Ascending aorta (tissue), 2 donors: ENCODE measurements at regions of chr17 and their contacts with region 1.

Region 1: GRCh38 chr17:18038861-18039534 is at the starts of genes ATPAF2 and GID4:
- DNase-seq: peak; percentile 98 to 100
- H3K4me3 ChIP-seq: peak within 1 kb of the TSS; percentile 93 to 98
- H3K27ac ChIP-seq: peak within 1 kb of the TSS; percentile 62 to 76
- H3K4me1 ChIP-seq: peaks cover 3 to 18% of the 10 kb centered on the region in 2 donors
- H3K27me3 ChIP-seq: no peaks in the 10 kb centered on the region
- CTCF ChIP-seq: no peak
- total RNA-seq, gene ATPAF2: 2.6 TPM
- total RNA-seq, gene GID4: 8.3 TPM

Region 2: GRCh38 chr17:17280613-17281549 is 758.1 kb before region 1 on chr17 and contains the start of gene COPS3:
- intact Hi-C with region 1: loop called (anchors 5 kb)
- DNase-seq: peak; percentile 88 to 99
- H3K4me3 ChIP-seq: peak within 1 kb of the TSS; percentile 88 to 92
- H3K27ac ChIP-seq: peak within 1 kb of the TSS; percentile 97 to 98
- H3K4me1 ChIP-seq: peaks cover 5 to 14% of the 10 kb centered on the region in 2 donors
- H3K27me3 ChIP-seq: no peaks in the 10 kb centered on the region
- CTCF ChIP-seq: no peak
- total RNA-seq, gene COPS3: 36.6 TPM

Region 3: GRCh38 chr17:17591355-17592298 is 447.4 kb before region 1 on chr17 and contains the start of gene PEMT:
- intact Hi-C with region 1: loop called (anchors 5 kb)
- DNase-seq: peak; percentile 92 to 99
- H3K4me3 ChIP-seq: peak within 1 kb of the TSS; percentile 79 to 80
- H3K27ac ChIP-seq: peak within 1 kb of the TSS; percentile 81 to 85
- H3K4me1 ChIP-seq: peaks cover 2 to 14% of the 10 kb centered on the region in 2 donors
- H3K27me3 ChIP-seq: no peaks in the 10 kb centered on the region
- CTCF ChIP-seq: no peak
- total RNA-seq, gene PEMT: 690 TPM

Region 4: DNA sequence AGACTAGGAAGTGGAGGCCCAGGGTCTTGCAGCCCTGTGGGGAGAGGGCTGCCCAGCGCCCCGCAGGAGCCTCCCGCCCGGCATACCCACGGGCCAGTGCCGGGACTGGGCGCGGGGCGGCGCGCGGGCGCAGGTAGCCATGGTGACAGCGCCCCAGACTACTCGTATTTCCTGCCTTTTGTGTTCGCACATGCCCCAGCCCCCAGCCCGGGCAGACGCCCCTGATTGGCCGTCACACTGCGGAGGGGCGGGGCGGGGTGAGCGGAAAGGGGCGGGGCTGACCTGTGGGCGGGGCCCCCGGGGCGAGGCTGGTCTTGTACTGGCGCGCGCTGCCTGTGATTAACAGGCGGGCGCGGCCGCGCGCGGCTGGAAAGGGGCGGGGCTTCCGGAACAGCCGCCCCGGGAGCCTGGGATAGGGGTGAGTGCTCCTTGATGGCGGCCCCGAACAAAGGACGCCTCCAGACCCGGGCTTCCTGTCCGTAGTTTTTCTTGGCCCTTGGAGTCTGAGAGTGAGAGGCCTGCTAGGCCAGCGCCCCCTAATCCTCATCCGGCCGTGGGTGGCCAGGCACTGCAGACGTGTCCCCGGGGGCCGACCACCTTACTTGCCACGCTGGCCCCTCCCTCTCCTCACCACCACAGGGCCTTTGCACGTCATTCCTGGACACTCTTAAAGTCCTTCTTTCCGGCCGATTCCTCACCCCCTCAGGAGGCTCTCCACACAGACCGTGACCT is 286.7 kb before region 1 on chr17:
- intact Hi-C with region 1: loop called (anchors 1 kb)
- DNase-seq: peak; percentile 94 to 98
- H3K4me3 ChIP-seq: peak overlapping the region; percentile 40 to 61
- H3K27ac ChIP-seq: peak overlapping the region; percentile 56 to 77
- H3K4me1 ChIP-seq: peaks cover 7 to 22% of the 10 kb centered on the region in 2 donors
- H3K27me3 ChIP-seq: no peaks in the 10 kb centered on the region
- CTCF ChIP-seq: peak; percentile 4 to 42 (median 33)

Region 5: GRCh38 chr17:17935321-17936271 is 103.4 kb before region 1 on chr17:
- intact Hi-C with region 1: no loop called
- DNase-seq: peak in 1 of 2 donors; percentile 72
- H3K4me3 ChIP-seq: no peak overlapping the region
- H3K27ac ChIP-seq: no peak overlapping the region
- H3K4me1 ChIP-seq: peaks cover 0 to 9% of the 10 kb centered on the region in 2 donors
- H3K27me3 ChIP-seq: no peaks in the 10 kb centered on the region
- CTCF ChIP-seq: no peak

Region 6: GRCh38 chr17:17972126-17972951 is 66.7 kb before region 1 on chr17 and contains the starts of genes DRC3 and TOM1L2:
- intact Hi-C with region 1: loop called (anchors 1 kb)
- DNase-seq: peak; percentile 100
- H3K4me3 ChIP-seq: peak within 1 kb of the TSS; percentile 56 to 69
- H3K27ac ChIP-seq: peak within 1 kb of the TSS; percentile 86 to 87
- H3K4me1 ChIP-seq: peaks cover 6 to 17% of the 10 kb centered on the region in 2 donors
- H3K27me3 ChIP-seq: no peaks in the 10 kb centered on the region
- CTCF ChIP-seq: peak in 1 of 3 experiments; percentile 7
- total RNA-seq, gene DRC3: 7.2 TPM
- total RNA-seq, gene TOM1L2: 39.0 TPM

Region 7: DNA sequence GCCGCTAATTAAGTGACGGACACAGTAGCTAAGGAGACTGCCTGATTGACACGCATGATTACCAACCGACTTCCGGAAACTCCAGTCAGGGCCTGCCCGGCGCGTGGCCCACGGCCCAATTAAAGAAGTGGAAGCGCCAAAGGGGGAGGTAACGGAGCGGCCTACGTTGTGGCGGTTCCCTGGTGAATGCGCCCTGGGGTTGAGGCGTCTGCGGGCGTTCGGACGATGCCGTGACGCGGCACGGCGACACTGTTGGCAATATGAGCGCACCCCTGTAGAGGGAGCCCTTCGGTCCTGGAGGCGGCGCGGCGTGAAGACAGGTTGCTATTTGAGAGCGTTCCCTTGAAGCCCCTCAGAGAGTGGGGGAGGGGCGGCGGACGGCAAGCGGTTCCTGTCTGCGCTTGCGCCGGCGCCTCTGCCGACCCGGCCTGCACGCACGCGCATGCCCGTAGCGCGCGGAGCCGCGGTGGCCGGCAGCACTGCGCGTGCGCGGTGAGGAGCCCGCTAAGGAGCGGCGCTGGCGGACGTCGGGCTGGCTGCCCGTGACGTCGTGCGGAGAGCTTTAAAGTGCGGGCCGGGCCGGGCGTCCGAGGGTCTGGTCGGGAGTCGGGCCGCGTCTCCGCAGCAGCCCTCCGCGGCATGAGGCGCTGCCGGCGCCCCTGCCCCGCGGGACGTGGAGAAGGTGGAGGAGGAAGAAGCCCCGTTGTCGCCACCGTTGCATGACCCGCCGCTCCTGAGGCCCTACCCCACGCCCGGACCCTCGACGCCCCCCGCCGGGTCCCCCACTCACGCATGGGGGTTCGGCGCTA is 144.5 kb after region 1 on chr17 and contains the start of gene ALKBH5:
- intact Hi-C with region 1: loop called (anchors 1 kb)
- DNase-seq: peak; percentile 96 to 99
- H3K4me3 ChIP-seq: peak within 1 kb of the TSS; percentile 86 to 96
- H3K27ac ChIP-seq: peak within 1 kb of the TSS; percentile 97 to 99
- H3K4me1 ChIP-seq: peaks cover 20 to 24% of the 10 kb centered on the region in 2 donors
- H3K27me3 ChIP-seq: no peaks in the 10 kb centered on the region
- CTCF ChIP-seq: peak in 2 of 3 experiments; percentile 10 to 25
- total RNA-seq, gene ALKBH5: 73.4 TPM